ENCODE measurements at regions of chr18 and their contacts with region 1.

Region 1: DNA sequence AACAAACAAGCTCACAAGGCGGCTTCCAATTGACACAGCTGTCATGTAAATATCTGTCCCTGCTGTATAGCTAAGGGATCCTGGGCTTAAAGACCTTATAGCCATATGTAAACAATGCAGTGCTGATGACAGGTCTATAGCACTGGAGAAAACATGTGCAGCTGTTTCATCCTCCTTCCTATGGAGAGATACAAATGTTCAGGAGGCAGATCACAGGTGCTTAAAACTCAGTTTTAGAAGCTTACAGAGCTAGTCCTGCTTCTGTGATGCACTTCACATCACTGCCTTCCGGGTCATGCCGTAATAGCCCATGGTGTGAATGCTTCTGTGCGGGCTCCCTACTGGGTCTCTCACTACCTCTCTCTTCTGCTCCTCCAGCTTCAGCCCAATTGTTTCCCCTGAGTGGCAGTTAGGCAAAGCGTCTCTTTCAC is 262.4 kb upstream of the CHST9 start:
- DNase-seq: no peak
- ATAC-seq: no peak

Region 2: GRCh38 chr18:27382567-27383216 is 64.8 kb before region 1 on chr18:
- intact Hi-C with region 1: loop called in 1 of 2 experiments (anchors 10 kb)
- DNase-seq: no peak
- ATAC-seq: peak in 1 of 2 donors; percentile 71

Measured in left cardiac atrium (tissue), 4 donors.